ENCODE measurements at regions of chr15 and their contacts with region 1.

Region 1: GRCh38 chr15:82931221-82931620 is 21.3 kb downstream of the HOMER2 start:
- DNase-seq: no peak

Region 2: DNA sequence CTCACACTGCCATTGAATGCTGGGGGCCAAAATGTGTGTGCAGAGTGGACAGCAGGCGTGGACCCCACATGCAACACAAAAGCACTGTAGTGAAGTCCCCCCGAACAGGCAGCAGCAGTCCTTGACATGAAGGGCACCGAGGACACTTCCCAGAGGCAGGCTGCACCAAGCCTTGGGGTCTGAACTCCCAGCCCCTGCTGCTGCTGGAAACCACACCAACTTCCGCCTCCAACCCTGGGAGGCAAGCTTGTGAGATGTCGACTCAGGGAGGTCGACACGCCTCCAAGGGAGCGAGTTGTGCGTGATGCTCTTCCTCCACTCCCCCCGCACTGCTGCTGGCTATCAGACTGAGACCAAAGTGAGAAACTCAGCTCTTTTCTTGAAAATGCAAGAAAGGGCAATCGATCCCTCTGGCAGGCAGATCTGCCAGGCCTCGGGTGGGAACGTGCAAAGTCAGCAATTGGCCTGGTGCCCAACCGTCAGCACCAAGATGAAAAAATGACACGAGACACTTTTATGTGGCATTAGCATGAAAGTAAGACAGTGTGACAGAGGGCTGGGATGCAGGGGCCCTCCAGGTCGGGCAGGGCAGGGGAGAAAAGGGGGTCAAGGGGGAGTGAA is 78.2 kb before region 1 on chr15:
- intact Hi-C with region 1: loop called in 1 of 2 experiments (anchors 1 kb)
- DNase-seq: no peak

Region 3: GRCh38 chr15:82919231-82919886 is 11.9 kb before region 1 on chr15:
- intact Hi-C with region 1: no loop called
- DNase-seq: no peak

Measured in posterior vena cava (tissue), 2 donors.